SK-N-SH (cell line): ENCODE measurements at regions of chr12 and their contacts with region 1.

Region 1: GRCh38 chr12:79384551-79384950 is 306.2 kb downstream of the PAWR start:
- DNase-seq: no peak
- H3K4me3 ChIP-seq: no peak overlapping the region
- H3K27ac ChIP-seq: no peak overlapping the region
- H3K4me1 ChIP-seq: no peaks in the 10 kb centered on the region
- H3K27me3 ChIP-seq: no peaks in the 10 kb centered on the region
- CTCF ChIP-seq: no peak
- EP300 ChIP-seq: no peak
- RAD21 ChIP-seq: no peak

Region 2: DNA sequence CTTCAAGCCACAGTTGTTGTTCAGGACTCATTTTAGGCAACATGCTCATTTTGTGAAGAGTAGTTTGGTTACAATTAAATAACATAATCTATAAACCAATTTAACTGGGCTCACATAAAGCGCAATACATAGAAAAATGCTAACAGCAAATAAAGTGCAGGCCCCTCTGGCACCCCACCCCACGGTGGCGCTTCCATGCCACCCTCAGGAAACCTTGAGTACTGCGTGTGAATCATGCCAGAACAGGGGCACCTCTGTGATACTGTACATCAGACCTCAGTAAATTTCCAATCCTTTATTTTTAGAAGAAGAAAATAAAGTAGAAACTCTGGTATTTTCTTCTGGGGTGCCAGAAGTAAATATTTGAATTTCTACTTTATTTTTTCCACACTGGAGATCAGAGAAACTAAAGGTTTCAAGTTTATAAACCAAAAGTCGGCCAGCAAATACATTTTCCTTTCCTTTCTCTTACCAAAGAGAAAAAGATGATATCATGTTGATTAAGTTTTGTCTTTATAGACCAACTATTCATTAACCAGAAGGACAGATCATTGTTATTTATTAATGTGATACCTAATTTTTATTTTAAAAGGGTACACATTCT is 10.6 kb before region 1 on chr12:
- CTCF ChIA-PET with region 1: interaction called, 11 read pairs
- POLR2A ChIA-PET with region 1: no interaction called
- DNase-seq: peak; percentile 74
- H3K4me3 ChIP-seq: no peak overlapping the region
- H3K27ac ChIP-seq: no peak overlapping the region
- H3K4me1 ChIP-seq: peaks cover 3 to 17% of the 10 kb centered on the region in 2 experiments; a peak in 3 of 4 replicates
- H3K27me3 ChIP-seq: no peaks in the 10 kb centered on the region
- CTCF ChIP-seq: peak; percentile 88
- EP300 ChIP-seq: no peak
- RAD21 ChIP-seq: peak; percentile 92

Region 3: DNA sequence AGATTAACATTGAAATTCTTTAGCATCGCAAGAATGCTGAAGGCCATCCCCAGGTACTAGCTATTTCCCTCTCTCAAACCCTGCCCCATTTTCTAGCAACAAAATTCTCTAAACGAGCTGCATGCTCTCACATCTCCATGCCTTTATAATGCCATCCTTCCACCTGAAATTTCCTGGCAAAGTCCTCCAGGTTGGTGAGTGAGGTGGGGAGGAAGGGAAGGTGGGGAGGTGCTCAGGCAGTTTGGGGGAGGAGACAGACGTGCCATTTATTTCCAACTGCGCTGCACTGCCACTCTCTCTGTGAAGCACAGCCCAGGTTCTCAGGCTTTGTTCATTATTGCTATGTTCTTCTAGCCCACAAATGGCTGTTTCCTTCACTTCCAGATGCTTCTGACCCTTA is 97.8 kb after region 1 on chr12:
- CTCF ChIA-PET with region 1: no interaction called
- POLR2A ChIA-PET with region 1: no interaction called
- DNase-seq: no peak
- H3K4me3 ChIP-seq: no peak overlapping the region
- H3K27ac ChIP-seq: no peak overlapping the region
- H3K4me1 ChIP-seq: no peaks in the 10 kb centered on the region
- H3K27me3 ChIP-seq: no peaks in the 10 kb centered on the region
- CTCF ChIP-seq: no peak
- EP300 ChIP-seq: no peak
- RAD21 ChIP-seq: no peak